ENCODE measurements at regions of chr17 and their contacts with region 1.

Region 1: GRCh38 chr17:35432176-35433074 is at the start of gene SLFN12:
- DNase-seq: peak; percentile 68
- ATAC-seq: peak; percentile 90 to 93
- total RNA-seq, gene SLFN12: 5.7 to 8.8 TPM

Region 2: DNA sequence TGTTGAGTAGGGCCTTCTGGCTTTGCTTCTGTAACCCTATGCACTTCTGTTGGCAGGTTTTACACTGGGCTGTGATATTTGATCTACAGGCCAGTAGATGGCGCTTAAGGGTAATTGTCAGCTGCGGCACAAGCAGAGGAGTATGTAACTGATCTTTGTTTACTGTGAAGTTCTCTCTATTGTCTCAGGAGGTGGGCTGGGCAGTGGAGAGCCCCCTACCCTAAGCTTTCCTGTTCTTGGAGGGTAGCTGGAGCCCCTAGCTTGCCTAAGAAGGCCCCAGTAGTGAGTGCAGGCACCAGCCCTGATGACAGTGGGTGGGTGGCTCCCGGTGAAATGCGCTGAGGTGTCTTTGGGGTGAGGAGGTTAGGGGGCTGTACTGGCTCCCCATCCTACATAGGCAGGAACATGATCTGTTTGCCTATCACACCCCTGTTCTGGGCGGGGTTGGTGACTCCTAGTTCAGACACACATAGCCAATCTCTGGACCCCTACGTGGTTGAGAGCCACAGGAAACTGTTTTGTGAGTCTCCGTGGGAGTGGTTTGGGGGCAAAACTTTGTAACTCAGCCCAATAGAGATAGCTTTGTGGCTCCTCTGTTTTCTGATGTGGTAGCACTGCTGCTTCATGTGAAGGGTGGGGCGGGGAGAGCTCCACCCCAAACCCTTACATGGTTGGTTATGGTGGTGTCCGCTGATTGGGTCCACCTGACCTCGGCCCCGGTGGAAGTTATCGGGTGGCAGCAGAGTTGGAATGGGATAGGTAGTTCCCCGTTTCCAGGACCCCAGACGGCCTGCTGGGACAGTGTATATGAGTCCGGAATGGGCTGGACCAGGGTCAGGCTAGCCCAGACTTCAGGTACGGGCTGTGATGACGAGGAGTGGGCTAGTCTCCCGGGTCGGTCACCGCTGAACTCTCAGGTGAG is 119.4 kb before region 1 on chr17:
- intact Hi-C with region 1: loop called in 1 of 2 experiments (anchors 5 kb)
- DNase-seq: peak; percentile 34
- ATAC-seq: peak; percentile 91